ENCODE measurements at regions of chr1 and their contacts with region 1.

Region 1: GRCh38 chr1:222465211-222466041 is 82.5 kb downstream of the HHIPL2 start:
- DNase-seq: peak; percentile 78
- H3K4me3 Mint-ChIP-seq: peak overlapping the region; percentile 67
- H3K27ac Mint-ChIP-seq: peak overlapping the region; percentile 85
- H3K4me1 Mint-ChIP-seq: peaks cover 10% of the 10 kb centered on the region
- H3K27me3 Mint-ChIP-seq: no peaks in the 10 kb centered on the region

Region 2: GRCh38 chr1:222617367-222617951 is 152.0 kb after region 1 on chr1:
- CTCF ChIA-PET with region 1: interaction called, 6 read pairs
- intact Hi-C with region 1: loop called (anchors 1 kb)
- DNase-seq: peak; percentile 92
- H3K4me3 Mint-ChIP-seq: peak overlapping the region; percentile 79
- H3K27ac Mint-ChIP-seq: peak overlapping the region; percentile 54
- H3K4me1 Mint-ChIP-seq: peaks cover 32% of the 10 kb centered on the region
- H3K27me3 Mint-ChIP-seq: peaks cover 3% of the 10 kb centered on the region

Region 3: GRCh38 chr1:222643938-222644635 is 178.7 kb after region 1 on chr1:
- CTCF ChIA-PET with region 1: interaction called, 3 read pairs
- intact Hi-C with region 1: loop called (anchors 2 kb)
- DNase-seq: peak; percentile 99
- H3K4me3 Mint-ChIP-seq: peak overlapping the region; percentile 99
- H3K27ac Mint-ChIP-seq: peak overlapping the region; percentile 92
- H3K4me1 Mint-ChIP-seq: peaks cover 32% of the 10 kb centered on the region
- H3K27me3 Mint-ChIP-seq: no peaks in the 10 kb centered on the region

Region 4: DNA sequence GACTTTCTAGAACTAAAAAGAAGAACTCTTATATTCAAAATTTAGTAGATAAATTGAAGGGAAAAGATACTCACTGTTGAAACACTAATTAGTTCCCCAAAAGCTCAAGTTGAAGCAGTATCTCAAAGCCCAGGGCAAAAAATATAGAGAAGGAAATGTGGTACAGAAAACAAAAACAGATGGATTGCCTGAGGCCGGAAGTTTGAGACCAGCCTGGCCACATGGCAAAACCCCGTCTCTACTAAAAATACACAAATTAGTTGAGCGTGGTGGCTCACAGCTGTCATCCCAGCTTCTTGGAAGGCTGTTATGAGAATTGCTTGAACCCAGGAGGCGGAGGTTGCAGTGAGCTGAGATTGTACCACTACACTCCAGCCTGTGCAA is 307.6 kb after region 1 on chr1:
- CTCF ChIA-PET with region 1: no interaction called
- intact Hi-C with region 1: loop called (anchors 10 kb)
- DNase-seq: peak; percentile 25
- H3K4me3 Mint-ChIP-seq: no peak overlapping the region
- H3K27ac Mint-ChIP-seq: no peak overlapping the region
- H3K4me1 Mint-ChIP-seq: peaks cover 10% of the 10 kb centered on the region
- H3K27me3 Mint-ChIP-seq: no peaks in the 10 kb centered on the region

Region 5: DNA sequence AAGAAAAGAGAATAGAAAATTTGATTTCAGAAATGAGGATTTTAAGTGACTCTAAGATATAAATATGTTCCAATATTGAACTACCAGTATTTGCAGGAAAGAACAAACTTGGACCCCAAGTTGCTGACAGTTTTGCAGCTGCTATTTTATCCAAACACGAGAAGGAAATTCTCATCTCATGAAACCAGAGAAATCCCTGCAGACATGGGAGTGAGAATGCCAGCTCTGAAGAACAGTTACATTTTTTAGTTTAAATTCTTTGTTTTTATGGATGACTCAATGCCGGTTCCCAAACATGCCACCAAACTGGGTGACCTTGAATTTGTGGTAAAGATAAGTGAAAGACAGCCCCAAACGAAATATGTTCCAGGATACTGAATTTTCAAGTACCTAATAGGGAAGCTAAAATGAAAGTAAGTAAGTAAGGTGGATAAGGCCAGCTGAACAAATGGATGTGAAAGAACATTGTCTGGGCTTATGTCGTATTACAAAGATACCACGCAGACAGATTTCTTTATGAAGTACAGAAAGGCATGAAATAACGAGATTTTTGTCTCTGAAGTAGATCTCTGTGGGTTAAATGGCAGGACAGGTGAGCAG is 657.7 kb after region 1 on chr1:
- CTCF ChIA-PET with region 1: no interaction called
- intact Hi-C with region 1: loop called (anchors 1 kb)
- DNase-seq: no peak
- H3K4me3 Mint-ChIP-seq: peak overlapping the region; percentile 14
- H3K27ac Mint-ChIP-seq: no peak overlapping the region
- H3K4me1 Mint-ChIP-seq: peaks cover 8% of the 10 kb centered on the region
- H3K27me3 Mint-ChIP-seq: no peaks in the 10 kb centered on the region